Common myeloid progenitor, CD34-positive (primary cell): ENCODE measurements at regions of chr1 and their contacts with region 1.

Region 1: GRCh38 chr1:119286587-119287181 is 81.9 kb upstream of the HAO2 start:
- DNase-seq: peak; percentile 34 to 65 (median 59)
- H3K4me3 ChIP-seq: no peak overlapping the region
- H3K27ac ChIP-seq: no peak overlapping the region
- H3K4me1 ChIP-seq: no peaks in the 10 kb centered on the region
- H3K27me3 ChIP-seq: peaks cover 0 to 2% (median 0%) of the 10 kb centered on the region in 5 experiments

Region 2: DNA sequence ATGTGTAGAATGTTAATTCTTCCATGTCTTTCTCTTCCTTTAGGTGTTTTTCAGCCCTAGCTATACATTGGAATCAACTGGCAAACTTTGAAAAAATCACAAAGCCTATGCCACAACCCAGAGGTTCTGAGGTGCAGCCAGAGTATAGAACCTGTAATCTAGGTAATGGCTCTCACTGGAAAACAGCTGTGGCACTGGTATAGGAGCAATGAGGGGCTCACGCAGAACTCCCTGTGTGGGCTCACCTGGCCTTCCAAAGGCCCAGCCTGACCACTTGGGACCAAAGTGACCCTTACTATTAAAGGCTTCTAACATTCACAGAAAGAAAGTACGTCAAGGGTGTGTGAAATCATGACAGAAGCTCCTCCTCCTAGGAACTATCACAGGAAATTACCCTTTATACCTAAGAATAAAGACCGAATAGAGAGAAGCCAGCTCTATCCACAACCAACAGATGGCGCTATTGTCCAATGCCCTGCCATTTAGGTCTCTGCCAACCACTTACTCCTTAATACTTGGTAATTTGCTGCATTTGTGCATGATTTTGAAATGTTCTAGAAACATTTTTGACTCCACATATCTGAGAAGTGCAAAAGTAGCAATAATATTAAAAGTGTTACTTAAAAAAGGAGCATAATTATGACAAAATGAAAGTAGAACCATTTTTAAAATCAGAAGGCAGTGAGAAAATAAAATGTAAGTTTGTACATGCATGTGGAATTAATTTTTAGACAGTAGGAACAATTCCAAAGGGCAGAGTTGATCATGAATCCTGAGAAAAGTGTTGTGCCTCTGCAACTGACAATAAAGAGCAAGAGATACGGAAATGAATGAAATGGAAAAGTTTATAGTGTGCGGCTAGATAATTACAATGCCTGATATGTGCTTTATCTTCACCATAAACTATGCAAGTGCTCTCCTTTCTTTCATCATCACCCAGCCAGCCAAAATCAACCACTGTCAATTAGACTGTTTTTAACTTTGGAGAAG is 11.2 kb before region 1 on chr1:
- CTCF ChIA-PET with region 1: interaction called, 16 read pairs
- POLR2A ChIA-PET with region 1: no interaction called
- DNase-seq: peak; percentile 48 to 71 (median 62)
- H3K4me3 ChIP-seq: no peak overlapping the region
- H3K27ac ChIP-seq: no peak overlapping the region
- H3K4me1 ChIP-seq: no peaks in the 10 kb centered on the region
- H3K27me3 ChIP-seq: peaks cover 0 to 12% (median 0%) of the 10 kb centered on the region in 5 experiments

Region 3: GRCh38 chr1:119367427-119368124 is 80.9 kb after region 1 on chr1:
- CTCF ChIA-PET with region 1: interaction called, 10 read pairs
- POLR2A ChIA-PET with region 1: no interaction called
- DNase-seq: peak; percentile 4 to 40 (median 35)
- H3K4me3 ChIP-seq: no peak overlapping the region
- H3K27ac ChIP-seq: no peak overlapping the region
- H3K4me1 ChIP-seq: peaks cover 0 to 2% (median 0%) of the 10 kb centered on the region in 4 experiments
- H3K27me3 ChIP-seq: peaks cover 0 to 5% (median 3%) of the 10 kb centered on the region in 5 experiments